Endothelial cell of umbilical vein (primary cell): ENCODE measurements at regions of chr12 and their contacts with region 1.

Region 1: GRCh38 chr12:13211859-13212664 is 15.5 kb downstream of the EMP1 start:
- DNase-seq: peak; percentile 70
- H3K4me3 ChIP-seq: no peak overlapping the region
- H3K27ac ChIP-seq: peak overlapping the region; percentile 54
- H3K4me1 ChIP-seq: peaks cover 49% of the 10 kb centered on the region
- H3K27me3 ChIP-seq: no peaks in the 10 kb centered on the region
- CTCF ChIP-seq: peak; percentile 72 to 76
- POLR2A ChIP-seq: no peak

Region 2: DNA sequence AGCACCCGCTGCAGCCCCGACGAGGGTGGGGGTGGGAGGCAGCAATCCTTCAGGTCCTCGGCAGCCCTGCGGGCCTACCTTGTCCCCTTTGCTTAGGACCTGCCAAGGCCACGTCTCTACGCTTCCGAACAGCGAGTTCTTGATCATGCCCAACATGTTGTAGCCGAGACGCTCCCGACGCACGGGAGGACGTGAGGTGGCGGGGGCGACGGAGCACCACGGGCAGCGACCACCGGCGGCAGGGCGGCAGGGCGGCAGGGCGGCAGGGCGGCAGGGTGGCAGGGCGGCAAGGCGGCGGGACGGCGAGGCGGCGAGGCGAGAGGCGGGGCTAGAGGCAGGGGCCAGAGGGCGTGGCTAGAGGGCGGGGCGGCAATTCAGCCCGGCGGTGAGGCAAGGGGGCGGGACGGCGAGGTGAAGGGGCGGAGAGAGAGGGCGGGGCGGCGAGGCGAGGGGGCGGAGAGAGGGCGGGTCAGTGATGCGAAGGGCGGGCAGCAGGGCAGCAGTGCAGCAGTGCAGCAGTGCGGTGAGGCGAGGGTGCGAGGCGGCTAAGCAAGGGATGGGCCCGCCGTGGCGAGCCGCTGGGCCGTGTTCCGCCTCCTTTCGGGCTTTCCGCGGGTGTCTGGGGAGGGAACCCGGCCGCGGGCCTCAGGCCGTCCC is 212.0 kb before region 1 on chr12 and contains the start of gene HEBP1:
- CTCF ChIA-PET with region 1: interaction called, 13 read pairs
- POLR2A ChIA-PET with region 1: no interaction called
- dilution Hi-C with region 1: no loop called
- intact Hi-C with region 1: loop called (anchors 1 kb)
- DNase-seq: peak; percentile 89
- H3K4me3 ChIP-seq: peak within 1 kb of the TSS; percentile 55 to 87 (median 85)
- H3K27ac ChIP-seq: peak within 1 kb of the TSS; percentile 71
- H3K4me1 ChIP-seq: peaks cover 22% of the 10 kb centered on the region
- H3K27me3 ChIP-seq: no peaks in the 10 kb centered on the region
- CTCF ChIP-seq: no peak
- POLR2A ChIP-seq: peak; percentile 91
- total RNA-seq, gene HEBP1: 44.8 and 59.5 TPM in 2 replicates

Region 3: GRCh38 chr12:13033476-13033875 is 178.6 kb before region 1 on chr12:
- CTCF ChIA-PET with region 1: interaction called, 17 read pairs
- POLR2A ChIA-PET with region 1: no interaction called
- dilution Hi-C with region 1: no loop called
- intact Hi-C with region 1: no loop called
- DNase-seq: peak; percentile 59
- H3K4me3 ChIP-seq: no peak overlapping the region
- H3K27ac ChIP-seq: peak overlapping the region; percentile 31
- H3K4me1 ChIP-seq: peaks cover 12% of the 10 kb centered on the region
- H3K27me3 ChIP-seq: no peaks in the 10 kb centered on the region
- CTCF ChIP-seq: no peak
- POLR2A ChIP-seq: no peak

Region 4: GRCh38 chr12:13079440-13079906 is 132.6 kb before region 1 on chr12:
- CTCF ChIA-PET with region 1: interaction called, 19 read pairs
- POLR2A ChIA-PET with region 1: no interaction called
- dilution Hi-C with region 1: no loop called
- intact Hi-C with region 1: no loop called
- DNase-seq: peak; percentile 98
- H3K4me3 ChIP-seq: no peak overlapping the region
- H3K27ac ChIP-seq: peak overlapping the region; percentile 69
- H3K4me1 ChIP-seq: peaks cover 12% of the 10 kb centered on the region
- H3K27me3 ChIP-seq: no peaks in the 10 kb centered on the region
- CTCF ChIP-seq: peak; percentile 64 to 76
- POLR2A ChIP-seq: no peak

Region 5: GRCh38 chr12:13165617-13166041 is 46.4 kb before region 1 on chr12:
- CTCF ChIA-PET with region 1: no interaction called
- POLR2A ChIA-PET with region 1: no interaction called
- dilution Hi-C with region 1: no loop called
- intact Hi-C with region 1: no loop called
- DNase-seq: peak; percentile 85
- H3K4me3 ChIP-seq: no peak overlapping the region
- H3K27ac ChIP-seq: peak overlapping the region; percentile 54
- H3K4me1 ChIP-seq: peaks cover 34% of the 10 kb centered on the region
- H3K27me3 ChIP-seq: no peaks in the 10 kb centered on the region
- CTCF ChIP-seq: no peak
- POLR2A ChIP-seq: no peak

Region 6: DNA sequence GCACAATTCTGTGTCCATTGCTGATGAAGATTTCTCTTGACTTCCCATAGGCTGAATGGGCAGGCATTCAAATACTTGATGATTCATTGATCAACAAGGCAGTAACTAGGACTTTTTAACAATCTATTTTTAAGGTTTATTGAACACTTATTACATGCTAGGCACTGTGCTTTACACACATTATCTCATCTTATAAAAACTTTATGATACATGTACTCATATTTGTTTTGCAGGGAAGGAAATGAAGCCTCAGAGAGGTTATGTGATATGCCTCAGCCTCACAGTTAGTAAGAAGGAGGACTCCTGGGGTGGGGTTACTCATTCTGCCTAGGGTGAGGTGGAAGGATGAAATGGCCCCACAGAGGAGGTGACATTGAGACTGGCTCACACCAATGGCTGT is 28.4 kb before region 1 on chr12:
- CTCF ChIA-PET with region 1: no interaction called
- POLR2A ChIA-PET with region 1: no interaction called
- dilution Hi-C with region 1: no loop called
- intact Hi-C with region 1: no loop called
- DNase-seq: no peak
- H3K4me3 ChIP-seq: no peak overlapping the region
- H3K27ac ChIP-seq: no peak overlapping the region
- H3K4me1 ChIP-seq: peaks cover 7% of the 10 kb centered on the region
- H3K27me3 ChIP-seq: no peaks in the 10 kb centered on the region
- CTCF ChIP-seq: no peak
- POLR2A ChIP-seq: no peak

Region 7: GRCh38 chr12:13196130-13196921 is 15.7 kb before region 1 on chr12 and contains the start of gene EMP1:
- CTCF ChIA-PET with region 1: interaction called, 20 read pairs
- POLR2A ChIA-PET with region 1: interaction called, 19 read pairs
- dilution Hi-C with region 1: no loop called
- intact Hi-C with region 1: no loop called
- DNase-seq: peak; percentile 99
- H3K4me3 ChIP-seq: peak within 1 kb of the TSS; percentile 85 to 99 (median 95)
- H3K27ac ChIP-seq: peak within 1 kb of the TSS; percentile 96
- H3K4me1 ChIP-seq: peaks cover 35% of the 10 kb centered on the region
- H3K27me3 ChIP-seq: no peaks in the 10 kb centered on the region
- CTCF ChIP-seq: no peak
- POLR2A ChIP-seq: peak; percentile 99
- total RNA-seq, gene EMP1: 528 and 577 TPM in 2 replicates

Region 8: DNA sequence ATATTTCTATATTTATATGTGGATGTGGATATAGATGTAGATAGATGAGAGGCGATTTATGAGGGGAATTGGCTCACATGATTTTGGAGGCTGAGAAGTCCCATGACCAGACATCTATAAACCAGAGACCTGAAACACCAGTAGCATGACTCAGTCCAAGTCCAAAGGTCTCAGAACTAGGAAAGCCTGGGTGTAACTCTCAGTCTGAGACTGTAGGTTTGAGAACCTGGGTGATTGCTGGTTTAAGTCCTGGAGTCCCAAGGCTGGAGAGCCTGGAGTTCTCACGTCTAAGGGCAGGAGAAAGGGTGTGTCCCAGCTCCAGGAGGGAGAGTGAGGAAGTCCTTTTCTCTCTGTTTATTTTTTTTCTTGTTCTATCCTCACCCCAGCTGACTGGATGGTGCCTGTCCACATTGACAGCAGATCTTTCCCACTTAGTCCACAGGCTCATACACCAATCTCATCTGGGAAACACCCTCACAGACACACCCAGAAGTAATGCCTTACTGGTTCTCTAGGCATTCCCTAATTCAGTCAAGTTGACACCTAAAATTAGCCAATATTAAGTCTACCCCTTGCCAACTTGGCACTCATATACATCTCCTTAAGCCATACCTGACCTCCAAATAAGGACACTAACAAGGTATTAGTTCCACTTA is 29.9 kb after region 1 on chr12:
- CTCF ChIA-PET with region 1: no interaction called
- POLR2A ChIA-PET with region 1: no interaction called
- dilution Hi-C with region 1: no loop called
- intact Hi-C with region 1: no loop called
- DNase-seq: no peak
- H3K4me3 ChIP-seq: no peak overlapping the region
- H3K27ac ChIP-seq: no peak overlapping the region
- H3K4me1 ChIP-seq: no peaks in the 10 kb centered on the region
- H3K27me3 ChIP-seq: no peaks in the 10 kb centered on the region
- CTCF ChIP-seq: no peak
- POLR2A ChIP-seq: no peak